Right lobe of liver (tissue), 6 donors: ENCODE measurements at regions of chr20 and their contacts with region 1.

Region 1: GRCh38 chr20:25178563-25179438 is 16.7 kb upstream of the ENTPD6 start:
- DNase-seq: no peak
- ATAC-seq: peak; percentile 81 to 89 (median 84)
- H3K4me3 ChIP-seq: no peak overlapping the region
- H3K27ac ChIP-seq: no peak overlapping the region
- H3K4me1 ChIP-seq: no peaks in the 10 kb centered on the region
- H3K27me3 ChIP-seq: no peaks in the 10 kb centered on the region
- CTCF ChIP-seq: peak; percentile 67 to 81 (median 70)
- POLR2A ChIP-seq: no peak

Region 2: DNA sequence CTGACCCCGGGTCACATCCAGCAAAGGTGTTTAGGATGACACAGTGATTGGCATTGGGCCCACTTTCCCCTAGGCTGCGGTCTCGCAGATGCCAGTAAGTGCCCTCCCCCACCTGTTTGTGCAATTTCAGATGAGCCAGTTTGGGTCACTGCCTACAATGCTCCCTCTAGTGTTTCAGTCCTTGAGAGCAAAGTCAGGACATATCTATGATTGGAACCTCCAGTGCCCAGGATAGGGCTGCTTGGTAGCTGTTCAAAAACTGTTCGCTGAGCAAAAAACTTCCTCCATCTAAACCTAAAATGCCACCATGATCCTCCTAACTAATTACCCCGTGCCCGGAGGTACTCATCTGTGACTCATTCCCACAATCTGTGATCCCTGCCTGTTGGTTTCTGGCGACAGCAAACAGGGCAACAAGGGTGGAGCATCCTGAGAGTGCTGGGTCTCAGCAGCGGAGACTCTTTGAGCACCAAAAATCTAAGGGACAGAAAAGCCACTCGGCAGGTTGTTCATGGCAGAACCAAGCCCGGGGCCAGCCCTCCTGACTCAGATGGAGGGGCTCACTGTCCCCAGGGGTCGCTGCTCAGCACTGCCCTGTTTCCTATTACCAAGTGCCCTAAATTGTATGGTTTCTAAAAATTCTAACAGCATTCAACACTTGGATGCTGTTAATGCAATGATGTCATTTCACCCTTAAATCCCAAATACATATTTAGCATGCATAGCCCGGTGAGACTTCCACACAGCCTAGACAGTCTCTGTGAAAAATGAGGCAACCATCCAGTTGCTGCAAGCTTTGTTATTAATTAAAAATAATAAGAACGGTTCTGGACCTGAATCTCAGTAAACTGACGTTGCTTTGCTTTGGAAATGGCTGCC is 101.8 kb before region 1 on chr20:
- intact Hi-C with region 1: loop called (anchors 10 kb)
- DNase-seq: peak in 2 of 3 donors; percentile 79 to 80
- ATAC-seq: peak; percentile 86 to 90 (median 88)
- H3K4me3 ChIP-seq: peak overlapping the region; percentile 27 to 43 (median 31)
- H3K27ac ChIP-seq: no peak overlapping the region
- H3K4me1 ChIP-seq: peaks cover 0 to 20% (median 5%) of the 10 kb centered on the region in 4 donors
- H3K27me3 ChIP-seq: peaks cover 8 to 23% of the 10 kb centered on the region in 2 donors
- CTCF ChIP-seq: peak; percentile 39 to 56 (median 52)
- POLR2A ChIP-seq: no peak